ENCODE measurements at regions of chr14 and their contacts with region 1.

Region 1: DNA sequence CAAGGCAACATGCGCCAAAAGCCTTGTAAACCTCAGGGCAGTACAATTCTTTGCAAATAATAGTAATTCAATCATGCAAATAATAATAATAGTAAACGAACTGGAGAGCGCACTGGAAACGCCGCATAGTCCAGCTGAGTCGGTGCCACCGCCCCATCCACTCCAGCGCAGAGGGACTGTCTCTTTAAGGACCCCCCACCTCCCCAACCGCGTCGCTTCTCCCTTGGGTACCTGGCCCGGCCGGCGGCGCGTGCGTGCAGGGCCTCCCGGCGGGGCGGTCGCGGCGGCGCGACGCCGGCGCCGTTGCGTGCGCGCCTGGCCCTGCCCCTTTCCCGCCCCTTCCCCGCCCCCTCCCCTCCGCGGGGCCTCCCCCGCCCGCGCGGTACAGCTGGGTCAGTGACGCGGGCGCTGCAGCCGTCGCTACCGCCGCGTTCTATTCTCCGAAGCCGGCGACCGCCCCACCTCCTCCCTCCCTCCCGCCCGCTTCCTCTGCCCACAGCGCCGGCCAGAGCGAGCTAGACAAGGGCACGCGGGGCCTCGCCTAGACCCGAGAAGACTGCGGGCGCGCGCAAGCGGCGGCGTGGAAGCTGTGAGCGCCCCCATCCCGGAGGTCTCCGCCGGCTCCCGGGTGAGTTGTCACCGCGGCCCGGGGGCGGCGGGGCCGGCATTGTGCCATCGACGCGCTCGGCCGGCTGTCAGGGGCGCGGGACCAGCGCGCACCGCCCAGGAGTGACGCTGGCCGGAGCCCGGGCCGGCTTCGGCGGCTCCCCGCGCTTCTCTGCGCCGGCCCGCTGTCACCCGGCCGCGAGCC is at the start of gene SUSD6:
- DNase-seq: peak; percentile 79 to 87 (median 85)
- ATAC-seq: peak; percentile 88
- H3K4me3 ChIP-seq: peak within 1 kb of the TSS; percentile 91
- H3K4me3 Mint-ChIP-seq: peak within 1 kb of the TSS; percentile 91 to 98 (median 94)
- H3K27ac ChIP-seq: peak within 1 kb of the TSS; percentile 85
- H3K27ac Mint-ChIP-seq: peak within 1 kb of the TSS; percentile 95 to 99 (median 98)
- H3K4me1 ChIP-seq: peaks cover 38 to 54% of the 10 kb centered on the region in 2 donors
- H3K4me1 Mint-ChIP-seq: peaks cover 44 to 69% (median 63%) of the 10 kb centered on the region in 7 donors
- H3K27me3 ChIP-seq: no peaks in the 10 kb centered on the region
- H3K27me3 Mint-ChIP-seq: no peaks in the 10 kb centered on the region
- total RNA-seq, gene SUSD6: 42.9 to 90.8 (median 65.0) TPM

Region 2: DNA sequence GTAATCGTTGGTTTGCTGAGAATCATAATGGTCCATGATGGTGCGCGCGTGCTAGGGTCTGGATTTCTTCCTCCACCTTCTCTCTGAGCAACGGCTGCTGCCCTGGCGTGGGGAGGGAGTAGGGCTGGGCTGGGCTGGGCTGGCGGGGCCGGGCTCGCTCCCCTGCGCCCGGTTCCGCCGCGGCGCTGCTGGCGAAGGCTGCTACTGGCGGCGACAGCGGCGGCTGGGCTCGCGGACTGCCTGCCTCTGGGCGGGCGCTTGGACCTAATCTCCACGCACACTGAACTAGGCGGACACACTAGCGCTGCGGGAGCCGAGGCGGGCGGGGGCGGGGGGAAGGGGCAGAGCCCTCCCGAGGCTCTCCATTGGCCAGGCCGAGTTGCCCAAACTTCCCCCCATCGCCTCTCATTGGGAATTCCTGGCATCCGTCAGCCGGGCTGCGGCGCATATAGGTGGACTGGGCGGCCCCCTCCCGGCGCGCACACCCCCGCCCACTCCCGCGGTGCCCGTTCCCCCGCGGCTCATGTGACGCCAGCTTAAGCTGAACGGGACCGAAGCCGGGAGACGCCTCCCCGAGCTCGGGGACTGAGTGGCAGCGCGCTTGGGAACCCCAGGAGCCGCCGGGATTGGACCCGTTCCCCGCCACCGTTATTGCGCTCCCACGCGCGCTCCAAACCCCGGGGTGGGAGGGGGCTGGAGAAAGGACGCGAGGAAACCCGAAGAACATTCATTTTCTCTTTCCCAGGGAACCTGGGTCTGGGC is 632.2 kb before region 1 on chr14 and contains the start of gene ACTN1:
- CTCF ChIA-PET with region 1: no interaction called
- POLR2A ChIA-PET with region 1: no interaction called
- intact Hi-C with region 1: loop called in 1 of 2 experiments (anchors 10 kb)
- DNase-seq: peak; percentile 46 to 74 (median 70)
- ATAC-seq: peak; percentile 81
- H3K4me3 ChIP-seq: peak within 1 kb of the TSS; percentile 83
- H3K4me3 Mint-ChIP-seq: peak within 1 kb of the TSS; percentile 75 to 98 (median 94)
- H3K27ac ChIP-seq: peak within 1 kb of the TSS; percentile 87
- H3K27ac Mint-ChIP-seq: peak within 1 kb of the TSS; percentile 81 to 100 (median 98)
- H3K4me1 ChIP-seq: peaks cover 5 to 33% of the 10 kb centered on the region in 2 donors
- H3K4me1 Mint-ChIP-seq: peaks cover 29 to 59% (median 47%) of the 10 kb centered on the region in 7 donors
- H3K27me3 ChIP-seq: no peaks in the 10 kb centered on the region
- H3K27me3 Mint-ChIP-seq: peaks cover 0 to 36% (median 0%) of the 10 kb centered on the region in 5 donors
- total RNA-seq, gene ACTN1: 41.3 to 249 (median 227) TPM

Region 3: GRCh38 chr14:69535230-69535848 is 76.1 kb before region 1 on chr14:
- CTCF ChIA-PET with region 1: no interaction called
- POLR2A ChIA-PET with region 1: no interaction called
- intact Hi-C with region 1: no loop called
- DNase-seq: peak in 1 of 9 donors; percentile 10
- ATAC-seq: no peak
- H3K4me3 ChIP-seq: no peak overlapping the region
- H3K4me3 Mint-ChIP-seq: no peak overlapping the region
- H3K27ac ChIP-seq: no peak overlapping the region
- H3K27ac Mint-ChIP-seq: no peak overlapping the region
- H3K4me1 ChIP-seq: no peaks in the 10 kb centered on the region
- H3K4me1 Mint-ChIP-seq: no peaks in the 10 kb centered on the region
- H3K27me3 ChIP-seq: peaks cover 0 to 4% of the 10 kb centered on the region in 2 donors
- H3K27me3 Mint-ChIP-seq: peaks cover 28 to 53% (median 37%) of the 10 kb centered on the region in 5 donors

Region 4: GRCh38 chr14:69625299-69626131 is 14.1 kb after region 1 on chr14:
- CTCF ChIA-PET with region 1: interaction called, 9 read pairs
- POLR2A ChIA-PET with region 1: interaction called, 39 read pairs
- intact Hi-C with region 1: loop called (anchors 1 kb)
- DNase-seq: peak; percentile 34 to 74 (median 66)
- ATAC-seq: peak; percentile 93
- H3K4me3 ChIP-seq: peak overlapping the region; percentile 41
- H3K4me3 Mint-ChIP-seq: peak overlapping the region; percentile 74 to 86 (median 82)
- H3K27ac ChIP-seq: peak overlapping the region; percentile 71
- H3K27ac Mint-ChIP-seq: peak overlapping the region; percentile 81 to 97 (median 92)
- H3K4me1 ChIP-seq: peaks cover 56 to 80% of the 10 kb centered on the region in 2 donors
- H3K4me1 Mint-ChIP-seq: peaks cover 69 to 97% (median 91%) of the 10 kb centered on the region in 7 donors
- H3K27me3 ChIP-seq: no peaks in the 10 kb centered on the region
- H3K27me3 Mint-ChIP-seq: no peaks in the 10 kb centered on the region

Region 5: DNA sequence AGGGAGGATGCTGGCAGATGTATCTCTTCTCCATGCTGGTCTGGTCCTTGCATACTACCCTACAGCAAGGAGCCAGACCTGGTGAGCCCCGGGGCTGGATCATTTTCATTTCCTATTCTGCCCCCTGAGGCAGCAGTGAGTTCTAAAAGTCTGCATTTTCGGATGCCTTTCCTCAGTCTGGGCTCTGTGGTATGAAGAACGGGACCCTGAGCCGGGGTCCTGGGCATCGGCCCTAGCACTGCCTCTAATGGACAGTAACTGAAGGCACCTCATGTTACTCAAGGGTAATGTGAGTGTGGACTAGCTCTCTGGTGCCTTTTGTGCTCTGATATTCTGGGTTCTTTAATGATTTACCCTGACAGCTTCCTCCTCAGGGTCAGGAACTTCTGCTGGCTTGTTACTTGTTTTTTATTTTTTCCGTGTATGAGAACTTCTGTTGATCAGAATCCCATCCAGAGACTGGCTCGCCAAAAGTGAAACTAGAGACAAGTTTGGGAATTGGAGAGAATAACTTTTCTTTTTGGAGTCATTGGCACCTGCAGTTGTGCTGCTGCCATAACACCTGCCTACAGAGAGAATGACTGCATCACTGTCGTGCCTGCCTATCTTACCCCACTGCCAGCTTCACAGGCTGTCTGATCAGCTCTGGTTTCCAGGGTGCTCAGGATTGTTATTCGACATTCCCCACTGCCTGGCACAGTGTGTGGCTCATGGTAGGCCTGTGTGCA is 62.3 kb after region 1 on chr14:
- CTCF ChIA-PET with region 1: interaction called, 3 read pairs
- POLR2A ChIA-PET with region 1: interaction called, 5 read pairs
- intact Hi-C with region 1: loop called in 1 of 2 experiments (anchors 1 kb)
- DNase-seq: no peak
- ATAC-seq: peak; percentile 56
- H3K4me3 ChIP-seq: peak overlapping the region; percentile 9
- H3K4me3 Mint-ChIP-seq: peak overlapping the region; percentile 39 to 80 (median 64)
- H3K27ac ChIP-seq: peak overlapping the region; percentile 55
- H3K27ac Mint-ChIP-seq: peak overlapping the region; percentile 43 to 91 (median 80)
- H3K4me1 ChIP-seq: peaks cover 46 to 67% of the 10 kb centered on the region in 2 donors
- H3K4me1 Mint-ChIP-seq: peaks cover 64 to 89% (median 82%) of the 10 kb centered on the region in 7 donors
- H3K27me3 ChIP-seq: no peaks in the 10 kb centered on the region
- H3K27me3 Mint-ChIP-seq: no peaks in the 10 kb centered on the region

Region 6: DNA sequence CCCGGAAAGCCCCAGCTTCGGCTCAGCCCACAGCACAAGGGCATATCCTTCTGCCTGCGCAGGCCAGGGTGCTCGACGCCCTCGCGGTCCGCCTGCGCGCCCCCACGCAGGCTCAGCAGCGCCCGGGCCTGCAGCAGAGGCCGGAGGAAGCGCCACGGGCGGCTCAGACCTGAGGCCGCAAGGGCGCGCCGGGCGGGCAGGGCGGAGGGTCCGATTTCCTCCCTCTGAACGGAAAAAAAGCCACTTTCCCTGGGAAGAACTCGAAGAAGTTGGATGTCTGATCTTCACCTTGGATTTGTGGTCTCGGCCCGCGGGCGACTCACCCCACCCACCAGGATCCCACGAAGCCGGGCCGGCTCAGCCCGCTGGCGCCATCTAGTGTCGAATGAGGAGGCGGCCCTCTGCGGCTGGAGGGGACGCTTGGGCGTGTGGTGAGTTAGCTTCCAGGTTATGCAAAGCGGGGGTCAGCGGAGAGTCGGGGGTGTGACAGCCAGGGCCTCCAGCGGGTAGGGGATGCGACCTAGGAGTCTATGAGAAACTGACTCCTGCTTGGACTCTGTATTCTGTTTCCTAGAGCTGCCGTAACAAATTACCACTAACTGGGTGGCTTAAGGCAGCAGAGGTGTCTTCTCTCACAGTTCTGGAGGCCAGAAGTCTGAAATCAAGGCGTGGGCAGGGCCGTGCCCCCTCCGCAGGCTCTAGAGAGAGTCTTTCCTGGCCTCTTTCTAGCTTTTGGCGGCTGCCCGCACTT is 115.5 kb after region 1 on chr14:
- CTCF ChIA-PET with region 1: interaction called, 38 read pairs
- POLR2A ChIA-PET with region 1: no interaction called
- intact Hi-C with region 1: loop called (anchors 2 kb)
- DNase-seq: peak; percentile 56 to 88 (median 77)
- ATAC-seq: peak; percentile 94
- H3K4me3 ChIP-seq: peak overlapping the region; percentile 72
- H3K4me3 Mint-ChIP-seq: peak overlapping the region; percentile 20 to 81 (median 58)
- H3K27ac ChIP-seq: peak overlapping the region; percentile 46
- H3K27ac Mint-ChIP-seq: peak overlapping the region in 6 of 9 donors; percentile 27 to 79 (median 57)
- H3K4me1 ChIP-seq: peaks cover 0 to 11% of the 10 kb centered on the region in 2 donors
- H3K4me1 Mint-ChIP-seq: peaks cover 0 to 36% (median 13%) of the 10 kb centered on the region in 7 donors
- H3K27me3 ChIP-seq: no peaks in the 10 kb centered on the region
- H3K27me3 Mint-ChIP-seq: peaks cover 0 to under 1% (median 0%) of the 10 kb centered on the region in 5 donors

Region 7: GRCh38 chr14:70188659-70189455 is 577.5 kb after region 1 on chr14 and contains the start of gene SLC8A3:
- CTCF ChIA-PET with region 1: no interaction called
- POLR2A ChIA-PET with region 1: no interaction called
- intact Hi-C with region 1: no loop called
- DNase-seq: peak in 1 of 9 donors; percentile 49
- ATAC-seq: peak; percentile 42
- H3K4me3 ChIP-seq: peak within 1 kb of the TSS; percentile 41
- H3K4me3 Mint-ChIP-seq: peak within 1 kb of the TSS; percentile 57 to 92 (median 84)
- H3K27ac ChIP-seq: no peak within 1 kb of the TSS
- H3K27ac Mint-ChIP-seq: no peak within 1 kb of the TSS
- H3K4me1 ChIP-seq: peaks cover 3 to 12% of the 10 kb centered on the region in 2 donors
- H3K4me1 Mint-ChIP-seq: peaks cover 15 to 30% (median 22%) of the 10 kb centered on the region in 7 donors
- H3K27me3 ChIP-seq: peaks cover 4 to 9% of the 10 kb centered on the region in 2 donors
- H3K27me3 Mint-ChIP-seq: peaks cover 60 to 75% (median 66%) of the 10 kb centered on the region in 5 donors
- total RNA-seq, gene SLC8A3: 0.13 to 0.47 (median 0.31) TPM in 3 of 5 experiments, not detected in the others

Region 8: GRCh38 chr14:70809543-70810244 is 1198.3 kb after region 1 on chr14:
- CTCF ChIA-PET with region 1: no interaction called
- POLR2A ChIA-PET with region 1: no interaction called
- intact Hi-C with region 1: loop called in 1 of 2 experiments (anchors 5 kb)
- DNase-seq: peak; percentile 68 to 87 (median 78)
- ATAC-seq: peak; percentile 90
- H3K4me3 ChIP-seq: peak overlapping the region; percentile 73
- H3K4me3 Mint-ChIP-seq: peak overlapping the region in 1 of 10 donors; percentile 87
- H3K27ac ChIP-seq: peak overlapping the region; percentile 65
- H3K27ac Mint-ChIP-seq: peak overlapping the region in 6 of 9 donors; percentile 79 to 92 (median 88)
- H3K4me1 ChIP-seq: peaks cover 3 to 10% of the 10 kb centered on the region in 2 donors
- H3K4me1 Mint-ChIP-seq: peaks cover 9 to 17% (median 13%) of the 10 kb centered on the region in 7 donors
- H3K27me3 ChIP-seq: no peaks in the 10 kb centered on the region
- H3K27me3 Mint-ChIP-seq: peaks cover 0 to 9% (median 4%) of the 10 kb centered on the region in 5 donors

Measured in naive thymus-derived CD4-positive, alpha-beta T cell (primary cell).